GM13976 (cell line): ENCODE measurements at regions of chr9 and their contacts with region 1.

Region 1: GRCh38 chr9:110152704-110153374 is 55.1 kb downstream of the C9orf152 start:
- DNase-seq: no peak
- CTCF ChIP-seq: peak; percentile 62

Region 2: GRCh38 chr9:109627041-109627440 is 525.8 kb before region 1 on chr9:
- in situ Hi-C with region 1: no loop called
- DNase-seq: no peak
- CTCF ChIP-seq: no peak

Region 3: DNA sequence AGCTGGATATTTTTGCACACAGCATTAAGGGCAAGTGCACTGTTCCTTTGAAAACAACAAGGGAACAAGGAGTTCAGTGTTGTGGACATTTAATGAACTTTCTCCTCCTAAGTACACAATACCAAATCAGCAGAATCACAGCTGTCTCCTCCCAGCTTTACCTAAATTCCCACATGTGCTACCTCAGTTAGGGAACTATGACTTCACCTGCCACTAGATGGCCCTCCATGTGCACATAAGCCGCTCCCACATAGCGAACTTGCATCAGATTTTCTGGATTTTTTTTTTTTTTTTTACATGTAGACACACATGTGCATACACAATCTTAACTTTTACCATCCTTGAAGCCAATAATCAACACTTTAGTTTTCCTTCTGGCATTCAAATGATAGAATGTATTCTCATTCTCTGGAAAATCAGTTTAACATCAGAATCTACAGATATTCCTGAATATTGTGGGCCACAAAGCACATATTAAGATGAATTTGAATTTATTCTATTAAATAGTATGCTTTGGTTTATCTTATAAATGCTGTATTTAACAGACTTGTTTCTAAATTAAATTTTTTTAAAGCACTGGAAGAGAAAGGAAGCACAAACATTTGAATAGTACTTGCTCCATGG is 249.2 kb before region 1 on chr9:
- in situ Hi-C with region 1: loop called (anchors 5 kb)
- DNase-seq: peak; percentile 56
- CTCF ChIP-seq: peak; percentile 72

Region 4: DNA sequence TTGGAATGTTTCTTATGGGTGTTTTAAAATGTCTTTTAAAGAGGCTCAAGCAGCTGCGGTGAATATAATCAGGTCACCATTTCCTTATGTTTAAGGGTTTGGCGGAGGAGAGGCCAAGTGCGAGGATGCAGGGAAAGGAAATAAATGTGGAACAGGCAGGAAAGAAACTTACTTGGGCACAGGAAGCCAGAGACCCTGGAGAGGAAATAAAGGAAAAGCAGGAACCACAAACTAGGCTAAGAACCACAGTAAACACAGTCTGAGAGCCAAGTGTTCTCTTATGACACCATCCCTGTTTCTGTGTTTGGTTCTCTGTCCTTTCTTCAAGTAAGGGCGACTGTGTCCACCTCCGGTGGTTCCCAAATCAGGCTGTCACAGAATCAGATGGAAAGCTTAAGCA is 111.4 kb before region 1 on chr9:
- in situ Hi-C with region 1: no loop called
- DNase-seq: no peak
- CTCF ChIP-seq: no peak